CD4-positive, alpha-beta T cell (primary cell): ENCODE measurements at regions of chr12 and their contacts with region 1.

Region 1: DNA sequence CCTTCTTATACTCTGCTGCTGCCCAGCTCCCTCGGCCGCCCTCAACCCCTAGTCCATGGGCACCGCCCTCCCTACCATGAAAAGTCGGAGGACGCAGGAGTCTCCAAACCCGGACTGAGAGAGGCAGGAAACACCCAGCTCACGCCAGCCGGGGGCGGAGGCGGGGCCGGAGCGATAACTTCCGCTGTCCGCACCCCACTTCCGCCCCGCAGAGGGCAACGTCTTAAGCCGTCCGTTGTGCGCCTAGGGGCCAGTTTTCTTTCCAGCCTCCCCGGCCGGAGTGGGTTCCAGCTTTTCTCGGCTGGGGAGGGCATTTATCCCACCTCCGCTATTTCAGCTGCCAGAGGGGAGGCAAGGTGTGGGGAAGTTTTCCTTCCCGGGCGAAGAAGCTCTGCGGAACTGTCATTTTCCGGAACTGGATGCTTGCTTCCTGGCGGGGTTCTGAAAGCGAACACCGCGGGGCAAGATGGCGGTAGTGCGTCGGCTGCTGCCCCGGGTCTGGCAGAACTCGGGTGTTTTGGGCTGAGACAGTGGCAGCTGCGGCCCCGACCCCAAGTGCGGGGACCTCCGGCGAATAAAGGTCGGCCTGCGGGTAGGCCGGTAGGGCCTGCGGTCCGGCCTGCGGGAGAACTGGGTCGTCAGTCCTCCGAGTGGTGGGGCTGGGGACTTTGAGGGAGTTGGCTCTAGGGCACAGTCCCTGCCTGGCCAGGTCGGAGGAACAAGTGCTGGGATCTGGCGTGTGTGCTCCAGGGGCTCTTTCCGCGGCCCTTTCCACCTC is at the starts of genes KCTD10 and UBE3B:
- DNase-seq: peak; percentile 74 to 93 (median 82)
- ATAC-seq: peak; percentile 91
- H3K4me3 ChIP-seq: peak within 1 kb of the TSS; percentile 90
- H3K4me3 Mint-ChIP-seq: peak within 1 kb of the TSS; percentile 98
- H3K27ac ChIP-seq: peak within 1 kb of the TSS; percentile 73 to 87
- H3K27ac Mint-ChIP-seq: peak within 1 kb of the TSS; percentile 92
- H3K4me1 ChIP-seq: peaks cover 30% of the 10 kb centered on the region
- H3K4me1 Mint-ChIP-seq: peaks cover 50% of the 10 kb centered on the region
- H3K27me3 ChIP-seq: no peaks in the 10 kb centered on the region
- H3K27me3 Mint-ChIP-seq: no peaks in the 10 kb centered on the region
- CTCF ChIP-seq: no peak
- total RNA-seq, gene KCTD10: 24.2 to 26.1 TPM
- total RNA-seq, gene UBE3B: 17.2 to 19.9 TPM

Region 2: DNA sequence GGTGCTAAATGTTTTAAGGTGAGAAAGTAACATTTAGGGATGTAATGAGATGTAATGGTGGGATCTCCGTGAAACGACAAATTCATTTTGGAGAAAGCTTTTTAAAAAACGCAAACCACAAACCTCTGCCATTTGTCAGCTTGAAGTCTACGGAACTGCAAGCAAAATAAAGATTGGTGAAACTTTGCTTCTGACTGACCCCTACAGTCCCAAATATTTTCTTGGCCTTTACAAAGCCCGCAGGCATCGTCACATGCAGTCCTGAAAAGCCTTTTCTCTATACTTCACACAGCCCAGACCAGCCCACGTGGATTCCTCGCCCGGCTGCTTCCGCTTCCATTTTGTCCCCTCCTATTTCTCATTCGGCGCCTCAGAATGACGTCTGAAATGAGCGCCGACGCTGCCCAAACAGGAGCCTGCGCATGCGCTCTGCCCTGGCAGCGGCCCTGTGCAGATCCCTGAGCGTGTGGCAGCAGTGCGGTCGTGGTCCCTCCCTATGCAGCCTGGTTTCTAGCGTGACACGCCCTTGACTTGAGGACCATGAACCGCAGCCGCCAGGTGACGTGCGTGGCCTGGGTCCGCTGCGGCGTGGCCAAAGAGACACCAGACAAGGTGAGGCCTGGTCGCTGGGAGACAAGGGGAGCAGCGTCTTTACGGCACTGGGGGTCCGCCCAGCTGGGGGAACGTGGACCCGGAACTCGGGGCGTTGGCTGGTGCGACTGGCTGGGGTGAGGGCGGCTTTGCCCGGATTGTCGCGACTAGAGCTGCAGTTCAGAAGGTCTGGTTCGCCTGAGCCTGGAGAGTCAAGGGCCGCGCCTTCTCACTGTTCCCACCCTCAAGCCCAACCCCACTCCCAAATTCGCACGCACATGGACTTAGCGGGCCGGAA is 1791.8 kb before region 1 on chr12 and contains the start of gene PWP1:
- CTCF ChIA-PET with region 1: no interaction called
- POLR2A ChIA-PET with region 1: no interaction called
- intact Hi-C with region 1: loop called in 1 of 2 experiments (anchors 5 kb)
- DNase-seq: peak; percentile 91 to 99 (median 94)
- ATAC-seq: peak; percentile 90
- H3K4me3 ChIP-seq: peak within 1 kb of the TSS; percentile 99
- H3K4me3 Mint-ChIP-seq: peak within 1 kb of the TSS; percentile 97
- H3K27ac ChIP-seq: peak within 1 kb of the TSS; percentile 75 to 91
- H3K27ac Mint-ChIP-seq: peak within 1 kb of the TSS; percentile 94
- H3K4me1 ChIP-seq: peaks cover 24% of the 10 kb centered on the region
- H3K4me1 Mint-ChIP-seq: peaks cover 33% of the 10 kb centered on the region
- H3K27me3 ChIP-seq: no peaks in the 10 kb centered on the region
- H3K27me3 Mint-ChIP-seq: no peaks in the 10 kb centered on the region
- CTCF ChIP-seq: no peak
- total RNA-seq, gene PWP1: 24.1 to 24.2 TPM

Region 3: GRCh38 chr12:108856428-108857157 is 620.8 kb before region 1 on chr12:
- CTCF ChIA-PET with region 1: no interaction called
- POLR2A ChIA-PET with region 1: no interaction called
- intact Hi-C with region 1: loop called in 1 of 2 experiments (anchors 5 kb)
- DNase-seq: peak in 13 of 14 experiments; percentile 35 to 92 (median 58)
- ATAC-seq: peak; percentile 75
- H3K4me3 ChIP-seq: peak overlapping the region; percentile 72
- H3K4me3 Mint-ChIP-seq: peak overlapping the region; percentile 95
- H3K27ac ChIP-seq: peak overlapping the region in 1 of 2 donors; percentile 22
- H3K27ac Mint-ChIP-seq: peak overlapping the region; percentile 90
- H3K4me1 ChIP-seq: peaks cover 36% of the 10 kb centered on the region
- H3K4me1 Mint-ChIP-seq: peaks cover 42% of the 10 kb centered on the region
- H3K27me3 ChIP-seq: no peaks in the 10 kb centered on the region
- H3K27me3 Mint-ChIP-seq: no peaks in the 10 kb centered on the region
- CTCF ChIP-seq: no peak

Region 4: DNA sequence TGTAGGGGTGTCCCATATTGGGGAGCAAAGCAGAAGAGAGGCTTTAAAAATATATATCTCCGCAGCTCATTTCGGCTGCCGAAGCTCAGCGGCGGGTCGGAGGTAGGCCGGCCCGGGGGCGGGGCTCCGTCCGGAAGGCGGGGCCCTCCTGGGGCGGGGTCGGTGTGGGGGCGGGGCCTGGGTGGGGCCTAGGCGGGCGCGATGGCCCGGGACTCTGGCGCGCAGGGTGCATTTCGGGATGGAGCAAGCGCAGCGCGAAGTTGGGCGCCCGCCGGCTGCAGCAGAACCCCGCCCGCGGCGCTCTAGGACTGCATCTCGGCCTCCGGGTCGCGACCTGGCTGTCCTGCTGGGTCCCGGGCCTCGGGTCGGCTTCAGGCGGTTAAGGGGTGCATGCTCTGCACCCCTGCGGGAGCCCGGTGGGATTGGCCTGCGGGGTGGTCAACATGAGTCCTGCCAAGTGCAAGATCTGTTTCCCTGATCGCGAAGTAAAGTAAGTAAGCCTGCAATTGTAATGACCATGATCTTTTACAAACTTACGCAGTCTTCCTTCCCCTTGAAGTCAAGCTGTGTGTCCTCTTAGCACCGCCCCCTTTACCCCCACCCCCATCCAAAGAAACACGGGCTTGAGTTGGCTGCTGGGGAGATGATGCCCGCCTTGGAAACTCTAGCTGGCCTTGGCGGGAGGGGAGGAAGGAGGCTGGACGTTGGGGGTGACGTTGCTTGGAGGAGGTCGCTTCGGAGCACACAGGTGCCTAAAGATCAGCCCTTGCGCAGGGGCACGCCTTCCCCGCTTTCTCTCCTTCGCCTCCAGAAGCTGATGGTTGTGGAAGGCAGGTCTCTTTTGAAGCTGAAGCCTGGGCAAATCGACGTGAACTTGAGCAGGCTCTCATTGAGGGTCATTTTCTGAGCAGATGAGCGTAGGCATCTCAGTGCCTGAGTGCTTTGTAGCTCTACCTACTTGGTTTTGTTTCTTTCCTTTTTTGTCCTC is 322.6 kb before region 1 on chr12:
- CTCF ChIA-PET with region 1: no interaction called
- POLR2A ChIA-PET with region 1: no interaction called
- intact Hi-C with region 1: loop called in 1 of 2 experiments (anchors 2 kb)
- DNase-seq: peak; percentile 71 to 90 (median 78)
- ATAC-seq: peak; percentile 95
- H3K4me3 ChIP-seq: peak overlapping the region; percentile 75
- H3K4me3 Mint-ChIP-seq: peak overlapping the region; percentile 96
- H3K27ac ChIP-seq: peak overlapping the region in 1 of 2 donors; percentile 17
- H3K27ac Mint-ChIP-seq: peak overlapping the region; percentile 93
- H3K4me1 ChIP-seq: peaks cover 16% of the 10 kb centered on the region
- H3K4me1 Mint-ChIP-seq: peaks cover 21% of the 10 kb centered on the region
- H3K27me3 ChIP-seq: no peaks in the 10 kb centered on the region
- H3K27me3 Mint-ChIP-seq: no peaks in the 10 kb centered on the region
- CTCF ChIP-seq: no peak

Region 5: GRCh38 chr12:109573029-109573913 is 95.9 kb after region 1 on chr12 and contains the starts of genes MMAB and MVK:
- CTCF ChIA-PET with region 1: no interaction called
- POLR2A ChIA-PET with region 1: interaction called, 11 read pairs
- intact Hi-C with region 1: loop called in 1 of 2 experiments (anchors 2 kb)
- DNase-seq: peak; percentile 95 to 100 (median 98)
- ATAC-seq: peak; percentile 91
- H3K4me3 ChIP-seq: peak within 1 kb of the TSS; percentile 78
- H3K4me3 Mint-ChIP-seq: peak within 1 kb of the TSS; percentile 99
- H3K27ac ChIP-seq: peak within 1 kb of the TSS; percentile 83 to 96
- H3K27ac Mint-ChIP-seq: peak within 1 kb of the TSS; percentile 95
- H3K4me1 ChIP-seq: peaks cover 19% of the 10 kb centered on the region
- H3K4me1 Mint-ChIP-seq: peaks cover 29% of the 10 kb centered on the region
- H3K27me3 ChIP-seq: no peaks in the 10 kb centered on the region
- H3K27me3 Mint-ChIP-seq: no peaks in the 10 kb centered on the region
- CTCF ChIP-seq: no peak
- total RNA-seq, gene MMAB: 8.6 to 9.2 TPM
- total RNA-seq, gene MVK: 8.2 to 8.4 TPM

Region 6: DNA sequence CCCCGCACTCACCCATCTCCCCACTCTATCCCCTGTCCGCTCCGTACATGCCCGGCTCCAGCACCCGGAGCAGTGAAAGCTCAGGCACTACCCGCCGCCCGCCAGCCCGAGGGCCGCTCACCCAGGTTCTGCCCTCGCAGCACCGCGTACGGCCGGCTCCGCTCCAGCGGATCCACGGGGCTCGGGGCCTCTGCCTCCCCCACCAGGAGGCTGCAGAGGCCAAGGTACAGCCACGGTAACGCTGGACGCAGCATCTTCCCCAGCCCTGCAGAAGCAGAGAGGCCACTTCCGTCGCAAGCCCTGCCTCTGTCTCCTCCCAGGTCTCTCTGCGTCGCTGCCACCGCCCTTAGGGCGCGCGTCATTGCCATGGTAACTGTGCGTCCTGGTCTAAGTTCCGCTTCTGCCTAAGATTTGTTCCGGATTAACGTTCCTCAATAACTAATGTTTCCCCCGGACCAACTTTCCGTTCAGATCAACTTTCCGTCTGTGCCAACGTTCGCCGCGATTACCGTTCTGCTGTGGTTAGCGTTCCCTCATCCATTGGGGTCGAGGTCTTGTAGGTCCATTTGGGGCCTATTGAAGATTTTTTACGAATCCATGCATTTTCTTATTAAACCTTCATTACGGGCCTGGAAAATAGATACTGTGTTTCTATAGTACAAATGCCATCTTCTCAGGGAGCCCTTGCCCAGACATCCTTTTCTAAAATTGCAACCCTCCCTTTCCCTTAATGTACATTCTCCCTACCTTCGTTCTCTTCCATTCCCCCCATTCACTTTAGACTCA is 571.1 kb after region 1 on chr12 and contains the start of gene C12orf76:
- CTCF ChIA-PET with region 1: no interaction called
- POLR2A ChIA-PET with region 1: no interaction called
- intact Hi-C with region 1: loop called in 1 of 2 experiments (anchors 5 kb)
- DNase-seq: peak; percentile 82 to 97 (median 90)
- ATAC-seq: peak; percentile 99
- H3K4me3 ChIP-seq: peak within 1 kb of the TSS; percentile 79
- H3K4me3 Mint-ChIP-seq: peak within 1 kb of the TSS; percentile 93
- H3K27ac ChIP-seq: peak within 1 kb of the TSS; percentile 76 to 87
- H3K27ac Mint-ChIP-seq: peak within 1 kb of the TSS; percentile 82
- H3K4me1 ChIP-seq: peaks cover 29% of the 10 kb centered on the region
- H3K4me1 Mint-ChIP-seq: peaks cover 29% of the 10 kb centered on the region
- H3K27me3 ChIP-seq: no peaks in the 10 kb centered on the region
- H3K27me3 Mint-ChIP-seq: no peaks in the 10 kb centered on the region
- CTCF ChIP-seq: no peak
- total RNA-seq, gene C12orf76: 9.8 to 12.6 TPM